Pancreas (tissue), 10 donors: ENCODE measurements at regions of chr1 and their contacts with region 1.

Region 1: GRCh38 chr1:25904943-25905679 is 1.1 kb downstream of the STMN1 start:
- DNase-seq: peak; percentile 88 to 95 (median 92)
- ATAC-seq: peak; percentile 92 to 97 (median 92)
- H3K4me3 ChIP-seq: peak overlapping the region; percentile 46 to 75 (median 58)
- H3K27ac ChIP-seq: peak overlapping the region in 1 of 4 donors; percentile 28
- H3K4me1 ChIP-seq: peaks cover 0 to 9% (median 8%) of the 10 kb centered on the region in 3 donors
- H3K27me3 ChIP-seq: no peaks in the 10 kb centered on the region
- CTCF ChIP-seq: no peak

Region 2: GRCh38 chr1:25990702-25991395 is 85.7 kb after region 1 on chr1:
- intact Hi-C with region 1: loop called in 1 of 3 experiments (anchors 5 kb)
- DNase-seq: no peak
- ATAC-seq: no peak
- H3K4me3 ChIP-seq: no peak overlapping the region
- H3K27ac ChIP-seq: no peak overlapping the region
- H3K4me1 ChIP-seq: no peaks in the 10 kb centered on the region
- H3K27me3 ChIP-seq: no peaks in the 10 kb centered on the region
- CTCF ChIP-seq: no peak